HepG2 (cell line): ENCODE measurements at regions of chr7 and their contacts with region 1.

Region 1: GRCh38 chr7:44082541-44083207 is 344 bp upstream of the POLM start:
- DNase-seq: peak; percentile 98
- ATAC-seq: peak; percentile 97
- H3K4me3 ChIP-seq: peak overlapping the region; percentile 55 to 73 (median 71); a peak in 5 of 6 replicates
- H3K27ac ChIP-seq: peak overlapping the region; percentile 33
- H3K4me1 ChIP-seq: peaks cover 26% of the 10 kb centered on the region
- H3K27me3 ChIP-seq: peaks cover 0 to 14% of the 10 kb centered on the region in 2 experiments; a peak in 2 of 5 replicates
- CTCF ChIP-seq: no peak
- EP300 ChIP-seq: no peak
- POLR2A ChIP-seq: peak in 1 of 2 experiments; percentile 75; a peak in 2 of 4 replicates
- RAD21 ChIP-seq: no peak

Region 2: GRCh38 chr7:44123190-44124003 is 40.7 kb after region 1 on chr7 and contains the start of gene POLD2:
- CTCF ChIA-PET with region 1: no interaction called
- POLR2A ChIA-PET with region 1: no interaction called
- in situ Hi-C with region 1: no loop called
- intact Hi-C with region 1: loop called (anchors 2 kb)
- DNase-seq: peak; percentile 90
- ATAC-seq: peak; percentile 99
- H3K4me3 ChIP-seq: peak within 1 kb of the TSS; percentile 78 to 86 (median 83)
- H3K27ac ChIP-seq: peak within 1 kb of the TSS; percentile 53
- H3K4me1 ChIP-seq: peaks cover 24% of the 10 kb centered on the region
- H3K27me3 ChIP-seq: no peaks in the 10 kb centered on the region; a peak in 1 of 5 replicates
- CTCF ChIP-seq: 0 out of 2 replicates have a peak, but pooled peaks have one; percentile 4
- EP300 ChIP-seq: no peak
- POLR2A ChIP-seq: peak; percentile 69 to 77
- RAD21 ChIP-seq: peak; percentile 47
- total RNA-seq, gene POLD2: 87.6 and 98.8 TPM in 2 replicates